ENCODE measurements at regions of chr20 and their contacts with region 1.

Region 1: DNA sequence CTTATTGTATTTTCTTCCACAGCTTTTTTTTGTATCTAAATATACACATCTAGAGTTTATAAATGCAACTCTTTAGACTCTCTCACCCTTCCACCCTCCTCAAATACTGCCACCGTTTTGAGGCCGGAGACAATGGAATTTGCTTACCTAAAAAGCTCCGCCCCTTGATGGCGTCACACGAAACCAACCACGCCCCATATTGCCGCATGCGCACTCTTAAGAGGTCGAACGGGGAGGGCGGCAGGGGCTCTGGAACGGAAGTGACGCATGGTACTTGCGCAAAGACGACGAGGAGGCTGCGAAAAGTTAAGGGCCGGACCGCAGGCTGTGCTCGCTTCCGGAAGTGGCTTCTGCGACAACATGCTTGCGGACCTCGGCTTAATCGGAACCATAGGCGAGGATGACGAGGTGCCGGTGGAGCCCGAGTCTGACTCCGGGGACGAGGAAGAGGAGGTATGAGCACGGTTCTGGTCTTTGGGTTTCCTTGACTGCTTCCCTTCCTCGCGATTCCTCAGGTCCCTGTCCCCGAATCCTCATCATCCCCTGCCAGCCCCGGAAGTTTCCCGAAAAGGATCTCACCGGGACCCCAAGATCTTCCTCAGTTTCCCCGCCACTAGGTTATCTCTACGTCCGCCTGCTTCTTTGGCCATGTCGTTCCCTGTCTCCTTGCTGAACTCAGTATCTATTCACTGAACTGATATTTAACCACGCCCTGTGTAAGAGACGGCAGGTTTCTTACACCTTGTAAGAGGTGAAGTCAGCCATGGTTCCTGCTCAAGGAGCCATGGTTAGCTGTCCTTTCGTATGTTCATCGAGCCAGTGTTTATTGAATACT is at the start of gene DDX27:
- DNase-seq: peak; percentile 99
- H3K4me3 ChIP-seq: peak within 1 kb of the TSS; percentile 61 to 80 (median 68)
- H3K27ac ChIP-seq: peak within 1 kb of the TSS; percentile 81 to 91 (median 86)
- H3K4me1 ChIP-seq: peaks cover 0 to 14% (median 12%) of the 10 kb centered on the region in 4 donors
- H3K27me3 ChIP-seq: no peaks in the 10 kb centered on the region
- CTCF ChIP-seq: no peak
- EP300 ChIP-seq: peak in 2 of 4 donors; percentile 11 to 94
- POLR2A ChIP-seq: peak; percentile 78 to 79
- total RNA-seq, gene DDX27: 23.5 to 28.2 (median 27.8) TPM

Region 2: GRCh38 chr20:49132995-49133478 is 86.3 kb before region 1 on chr20:
- intact Hi-C with region 1: loop called (anchors 1 kb)
- DNase-seq: no peak
- H3K4me3 ChIP-seq: no peak overlapping the region
- H3K27ac ChIP-seq: peak overlapping the region in 3 of 4 donors; percentile 19 to 50 (median 36)
- H3K4me1 ChIP-seq: peaks cover 0 to 11% (median 7%) of the 10 kb centered on the region in 4 donors
- H3K27me3 ChIP-seq: no peaks in the 10 kb centered on the region
- CTCF ChIP-seq: peak; percentile 26 to 66 (median 48)
- EP300 ChIP-seq: no peak
- POLR2A ChIP-seq: no peak

Region 3: DNA sequence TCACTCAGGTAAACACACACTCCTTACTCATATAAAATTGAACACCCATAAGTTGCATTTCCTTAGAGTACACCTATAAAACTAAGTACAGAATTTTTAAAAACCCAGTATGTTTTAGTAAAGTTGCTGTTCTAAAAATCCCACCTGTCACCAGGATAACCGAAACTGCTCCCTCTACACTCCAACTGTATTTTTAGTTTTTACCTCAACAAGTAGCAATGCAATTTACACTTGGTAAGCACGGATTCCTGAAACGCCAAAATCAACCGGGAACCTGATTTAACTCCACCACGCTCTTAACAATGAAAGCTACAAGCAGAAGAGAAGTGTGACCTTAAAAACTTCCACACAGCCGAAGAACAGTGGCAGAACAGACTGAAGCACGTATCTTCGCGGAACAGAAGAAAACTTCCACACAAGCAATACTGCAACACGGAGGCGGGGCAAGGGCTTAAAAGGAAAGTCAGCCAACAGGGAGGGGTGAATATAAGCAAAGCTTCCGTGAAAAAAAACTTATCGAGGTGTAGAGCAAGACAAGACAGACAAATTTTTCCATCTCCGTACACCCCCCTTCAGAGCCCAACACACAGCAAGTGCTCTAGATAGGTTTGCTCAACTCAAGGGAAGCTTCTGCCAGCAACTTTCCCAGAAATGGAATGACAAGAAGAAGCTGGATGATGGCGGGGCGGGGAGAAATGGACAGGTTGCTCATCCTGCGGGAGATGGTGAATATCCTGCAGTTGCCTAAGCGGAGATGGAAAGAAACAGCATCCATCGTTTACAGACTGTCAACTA is 32.6 kb before region 1 on chr20:
- intact Hi-C with region 1: loop called (anchors 2 kb)
- DNase-seq: peak; percentile 85
- H3K4me3 ChIP-seq: peak overlapping the region; percentile 79 to 95 (median 90)
- H3K27ac ChIP-seq: peak overlapping the region; percentile 90 to 98 (median 96)
- H3K4me1 ChIP-seq: peaks cover 0 to 48% (median 34%) of the 10 kb centered on the region in 4 donors
- H3K27me3 ChIP-seq: no peaks in the 10 kb centered on the region
- CTCF ChIP-seq: no peak
- EP300 ChIP-seq: no peak
- POLR2A ChIP-seq: peak in 1 of 2 donors; percentile 12

Region 4: GRCh38 chr20:49278036-49278817 is 58.9 kb after region 1 on chr20 and contains the start of gene ZNFX1:
- intact Hi-C with region 1: loop called (anchors 2 kb)
- DNase-seq: peak; percentile 99
- H3K4me3 ChIP-seq: peak within 1 kb of the TSS; percentile 86 to 98 (median 90)
- H3K27ac ChIP-seq: peak within 1 kb of the TSS; percentile 95 to 98 (median 97)
- H3K4me1 ChIP-seq: peaks cover 0 to 59% (median 55%) of the 10 kb centered on the region in 4 donors
- H3K27me3 ChIP-seq: no peaks in the 10 kb centered on the region
- CTCF ChIP-seq: no peak
- EP300 ChIP-seq: no peak
- POLR2A ChIP-seq: peak; percentile 99 to 100
- total RNA-seq, gene ZNFX1: 25.7 to 32.1 (median 29.6) TPM

Measured in sigmoid colon (tissue), 7 donors.